B cell (primary cell): ENCODE measurements at regions of chr12 and their contacts with region 1.

Region 1: DNA sequence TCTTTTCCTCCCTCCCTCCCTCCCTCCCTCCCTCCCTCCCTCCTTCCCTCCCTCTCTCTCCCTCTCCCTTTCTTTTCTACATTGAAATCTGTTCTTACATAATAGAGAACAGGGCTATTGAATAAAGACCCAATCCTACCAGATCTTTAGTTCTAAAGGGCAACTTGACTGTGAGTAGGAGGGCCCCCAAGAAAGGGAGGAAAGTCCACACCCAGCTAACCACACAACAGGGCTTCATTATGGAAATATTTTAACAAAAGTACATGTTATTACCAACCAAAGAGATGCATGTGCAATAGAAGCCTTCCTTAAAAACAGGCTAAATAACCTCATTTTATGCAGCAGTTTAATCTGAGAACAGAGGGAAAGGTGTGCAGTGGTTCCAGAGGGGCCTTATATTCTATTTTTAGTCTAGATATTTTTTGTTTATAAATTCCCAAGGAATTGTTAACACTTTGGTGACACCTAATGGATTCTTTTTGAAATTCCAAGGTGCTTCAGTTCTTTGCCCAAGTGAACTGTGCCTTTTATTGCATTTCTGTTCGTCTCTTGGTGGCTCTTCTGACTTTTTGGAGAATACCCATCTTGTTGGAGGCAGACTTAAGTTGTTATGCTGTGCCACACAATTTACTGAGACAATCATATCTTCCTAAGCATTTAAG is 63.0 kb downstream of the GNS start:
- DNase-seq: no peak
- ATAC-seq: no peak
- H3K4me3 ChIP-seq: no peak overlapping the region
- H3K4me3 Mint-ChIP-seq: no peak overlapping the region
- H3K27ac ChIP-seq: peak overlapping the region in 1 of 2 donors; percentile 46
- H3K27ac Mint-ChIP-seq: no peak overlapping the region
- H3K4me1 ChIP-seq: peaks cover 6 to 13% of the 10 kb centered on the region in 2 donors
- H3K4me1 Mint-ChIP-seq: peaks cover 28% of the 10 kb centered on the region
- H3K27me3 ChIP-seq: no peaks in the 10 kb centered on the region
- H3K27me3 Mint-ChIP-seq: no peaks in the 10 kb centered on the region
- CTCF ChIP-seq: no peak

Region 2: DNA sequence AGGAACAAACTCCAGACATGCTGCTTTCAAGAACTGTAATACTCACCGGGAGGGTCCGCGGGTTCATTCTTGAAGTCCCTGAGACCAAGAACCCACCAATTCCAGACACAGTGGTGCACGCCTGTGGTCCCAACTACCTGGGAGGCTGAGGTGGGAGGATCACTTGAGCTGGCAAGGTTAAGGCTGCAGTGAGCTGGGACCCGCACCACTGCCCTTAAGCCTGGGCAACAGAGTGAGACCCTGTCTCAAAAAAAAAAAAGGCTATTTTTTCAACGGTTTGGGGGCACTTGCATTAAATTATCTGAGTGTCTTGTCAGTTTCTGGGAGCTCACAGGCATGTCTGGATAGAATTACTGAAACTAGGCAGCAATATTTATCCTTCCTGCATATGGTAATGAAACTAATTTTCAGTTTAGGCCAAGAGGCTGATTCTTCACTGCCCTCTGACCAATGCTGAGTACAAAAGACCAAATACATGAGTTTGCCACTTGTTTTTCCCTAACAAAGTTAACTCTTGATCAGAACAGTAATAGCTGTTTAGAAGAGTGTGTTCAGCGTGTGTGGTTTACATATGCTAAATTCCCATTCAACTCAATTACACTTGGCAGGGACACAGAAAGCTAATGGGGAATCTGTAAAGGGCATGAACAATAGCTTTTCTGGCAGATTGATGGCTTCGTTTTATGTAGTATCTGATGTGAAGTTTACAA is 151.7 kb before region 1 on chr12:
- CTCF ChIA-PET with region 1: interaction called, 352 read pairs
- POLR2A ChIA-PET with region 1: interaction called, 3 read pairs
- intact Hi-C with region 1: loop called (anchors 1 kb)
- DNase-seq: no peak
- ATAC-seq: no peak
- H3K4me3 ChIP-seq: no peak overlapping the region
- H3K4me3 Mint-ChIP-seq: no peak overlapping the region
- H3K27ac ChIP-seq: no peak overlapping the region
- H3K27ac Mint-ChIP-seq: no peak overlapping the region
- H3K4me1 ChIP-seq: no peaks in the 10 kb centered on the region
- H3K4me1 Mint-ChIP-seq: no peaks in the 10 kb centered on the region
- H3K27me3 ChIP-seq: no peaks in the 10 kb centered on the region
- H3K27me3 Mint-ChIP-seq: peaks cover 14% of the 10 kb centered on the region
- CTCF ChIP-seq: no peak

Region 3: DNA sequence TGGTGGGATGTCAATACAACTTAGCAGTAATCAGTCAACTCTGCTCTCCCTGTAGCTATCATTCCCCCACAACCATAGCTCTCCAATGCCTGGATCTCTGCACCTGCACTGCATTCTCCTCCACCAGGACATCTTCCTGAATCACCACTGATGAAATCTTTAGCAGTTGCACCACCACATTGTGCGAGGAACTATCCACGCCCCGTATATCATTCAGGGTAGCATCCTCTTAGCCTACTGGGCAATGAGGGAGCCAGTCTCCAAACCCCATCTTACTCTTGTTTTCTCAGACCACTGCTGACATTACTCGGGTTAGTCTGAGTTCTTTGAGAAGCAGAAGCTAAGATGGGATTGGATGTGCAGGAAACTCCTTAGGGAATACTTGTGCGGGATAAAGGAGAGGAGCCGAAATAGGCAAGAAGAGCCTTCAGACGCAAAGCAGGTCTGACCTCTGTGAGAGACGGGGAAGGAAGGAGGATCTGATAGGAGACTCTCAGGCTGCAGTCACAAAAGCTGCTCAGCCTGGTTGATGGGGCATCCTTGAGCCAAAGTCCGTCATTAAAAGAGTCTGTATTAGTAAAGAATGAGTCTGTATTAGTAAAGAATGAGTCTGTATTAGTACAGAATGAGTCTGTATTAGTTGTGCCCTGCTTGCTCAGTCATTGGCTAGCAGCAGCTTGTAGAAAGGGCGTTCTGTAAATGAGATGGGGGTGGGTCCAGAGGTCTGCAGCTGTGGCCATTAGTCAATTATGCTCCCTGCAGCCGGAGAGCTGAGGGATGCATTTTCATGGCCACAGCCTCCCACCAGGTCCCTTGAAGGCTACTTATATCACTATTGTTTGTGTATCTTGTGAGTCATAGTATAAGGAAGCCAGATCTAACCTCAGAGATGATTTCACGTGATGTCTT is 135.6 kb before region 1 on chr12:
- CTCF ChIA-PET with region 1: interaction called, 10 read pairs
- POLR2A ChIA-PET with region 1: no interaction called
- intact Hi-C with region 1: no loop called
- DNase-seq: no peak
- ATAC-seq: no peak
- H3K4me3 ChIP-seq: no peak overlapping the region
- H3K4me3 Mint-ChIP-seq: no peak overlapping the region
- H3K27ac ChIP-seq: no peak overlapping the region
- H3K27ac Mint-ChIP-seq: no peak overlapping the region
- H3K4me1 ChIP-seq: no peaks in the 10 kb centered on the region
- H3K4me1 Mint-ChIP-seq: no peaks in the 10 kb centered on the region
- H3K27me3 ChIP-seq: no peaks in the 10 kb centered on the region
- H3K27me3 Mint-ChIP-seq: no peaks in the 10 kb centered on the region
- CTCF ChIP-seq: no peak

Region 4: GRCh38 chr12:64603183-64603841 is 92.9 kb before region 1 on chr12:
- CTCF ChIA-PET with region 1: interaction called, 70 read pairs
- POLR2A ChIA-PET with region 1: no interaction called
- intact Hi-C with region 1: no loop called
- DNase-seq: no peak
- ATAC-seq: no peak
- H3K4me3 ChIP-seq: no peak overlapping the region
- H3K4me3 Mint-ChIP-seq: no peak overlapping the region
- H3K27ac ChIP-seq: no peak overlapping the region
- H3K27ac Mint-ChIP-seq: no peak overlapping the region
- H3K4me1 ChIP-seq: no peaks in the 10 kb centered on the region
- H3K4me1 Mint-ChIP-seq: no peaks in the 10 kb centered on the region
- H3K27me3 ChIP-seq: no peaks in the 10 kb centered on the region
- H3K27me3 Mint-ChIP-seq: no peaks in the 10 kb centered on the region
- CTCF ChIP-seq: no peak

Region 5: GRCh38 chr12:64669270-64669842 is 26.9 kb before region 1 on chr12:
- CTCF ChIA-PET with region 1: interaction called, 19 read pairs
- POLR2A ChIA-PET with region 1: no interaction called
- intact Hi-C with region 1: no loop called
- DNase-seq: peak; percentile 67
- ATAC-seq: peak; percentile 73
- H3K4me3 ChIP-seq: peak overlapping the region; percentile 31 to 62 (median 52)
- H3K4me3 Mint-ChIP-seq: peak overlapping the region; percentile 89
- H3K27ac ChIP-seq: peak overlapping the region; percentile 78 to 87
- H3K27ac Mint-ChIP-seq: peak overlapping the region; percentile 83
- H3K4me1 ChIP-seq: peaks cover 93 to 94% of the 10 kb centered on the region in 2 donors
- H3K4me1 Mint-ChIP-seq: peaks cover 91% of the 10 kb centered on the region
- H3K27me3 ChIP-seq: no peaks in the 10 kb centered on the region
- H3K27me3 Mint-ChIP-seq: no peaks in the 10 kb centered on the region
- CTCF ChIP-seq: no peak

Region 6: DNA sequence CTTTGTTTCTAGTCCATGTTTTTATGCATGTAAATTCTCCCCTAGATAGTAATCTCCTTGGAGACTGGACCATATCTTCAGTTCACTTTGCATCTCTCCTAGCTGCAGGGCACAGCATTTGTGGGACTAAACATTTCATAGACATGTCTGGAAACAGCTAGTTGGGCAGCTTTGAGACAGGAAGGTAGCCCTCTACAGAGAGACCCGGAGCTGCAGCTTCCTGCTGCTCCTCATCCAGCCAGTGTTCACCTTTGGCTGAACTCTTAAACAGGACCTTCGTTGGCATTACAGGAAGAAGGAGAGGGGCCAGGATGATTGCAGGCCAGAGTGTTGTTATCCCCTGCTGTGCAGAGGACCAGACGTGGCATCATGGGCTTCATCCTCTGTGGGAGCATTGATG is 10.1 kb after region 1 on chr12:
- CTCF ChIA-PET with region 1: interaction called, 30 read pairs
- POLR2A ChIA-PET with region 1: no interaction called
- intact Hi-C with region 1: no loop called
- DNase-seq: no peak
- ATAC-seq: no peak
- H3K4me3 ChIP-seq: no peak overlapping the region
- H3K4me3 Mint-ChIP-seq: no peak overlapping the region
- H3K27ac ChIP-seq: no peak overlapping the region
- H3K27ac Mint-ChIP-seq: no peak overlapping the region
- H3K4me1 ChIP-seq: no peaks in the 10 kb centered on the region
- H3K4me1 Mint-ChIP-seq: peaks cover 2% of the 10 kb centered on the region
- H3K27me3 ChIP-seq: no peaks in the 10 kb centered on the region
- H3K27me3 Mint-ChIP-seq: no peaks in the 10 kb centered on the region
- CTCF ChIP-seq: no peak